SK-N-SH (cell line): ENCODE measurements at regions of chr4 and their contacts with region 1.

Region 1: GRCh38 chr4:168514249-168514852 is 17.5 kb downstream of the PALLD start:
- DNase-seq: peak; percentile 22
- H3K4me3 ChIP-seq: no peak overlapping the region
- H3K27ac ChIP-seq: no peak overlapping the region
- H3K4me1 ChIP-seq: peaks cover 0 to 4% of the 10 kb centered on the region in 2 experiments; a peak in 3 of 4 replicates
- H3K27me3 ChIP-seq: no peaks in the 10 kb centered on the region
- CTCF ChIP-seq: peak; percentile 68
- EP300 ChIP-seq: no peak
- RAD21 ChIP-seq: peak; percentile 57

Region 2: DNA sequence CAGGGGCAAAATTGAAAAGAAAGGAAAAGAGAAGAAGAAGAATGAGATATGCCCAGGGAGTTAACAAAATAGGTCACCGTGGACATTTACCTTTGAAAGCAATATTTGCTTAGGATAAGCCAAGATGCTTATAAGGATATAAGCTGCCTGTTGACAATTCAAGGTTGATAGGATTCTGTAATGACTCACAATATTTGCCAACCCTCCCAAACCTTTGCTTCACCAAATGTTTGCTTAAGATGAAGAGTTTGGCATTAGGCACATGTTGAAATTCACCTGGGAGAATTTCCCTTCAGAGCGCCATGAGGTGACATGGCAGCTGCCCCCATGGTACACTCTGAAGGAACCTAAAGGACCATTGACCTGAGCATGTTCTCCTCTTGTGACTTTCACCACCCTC is 13.0 kb before region 1 on chr4:
- CTCF ChIA-PET with region 1: interaction called, 18 read pairs
- POLR2A ChIA-PET with region 1: no interaction called
- DNase-seq: no peak
- H3K4me3 ChIP-seq: no peak overlapping the region
- H3K27ac ChIP-seq: no peak overlapping the region
- H3K4me1 ChIP-seq: peaks cover 0 to 4% of the 10 kb centered on the region in 2 experiments; a peak in 1 of 4 replicates
- H3K27me3 ChIP-seq: no peaks in the 10 kb centered on the region
- CTCF ChIP-seq: no peak
- EP300 ChIP-seq: no peak
- RAD21 ChIP-seq: no peak

Region 3: GRCh38 chr4:168528131-168528949 is 14.0 kb after region 1 on chr4:
- CTCF ChIA-PET with region 1: interaction called, 20 read pairs
- POLR2A ChIA-PET with region 1: no interaction called
- DNase-seq: no peak
- H3K4me3 ChIP-seq: no peak overlapping the region
- H3K27ac ChIP-seq: peak overlapping the region in 1 of 2 experiments; percentile 65; a peak in 2 of 4 replicates
- H3K4me1 ChIP-seq: peaks cover 0 to 20% of the 10 kb centered on the region in 2 experiments; a peak in 2 of 4 replicates
- H3K27me3 ChIP-seq: no peaks in the 10 kb centered on the region
- CTCF ChIP-seq: no peak
- EP300 ChIP-seq: no peak
- RAD21 ChIP-seq: no peak

Region 4: DNA sequence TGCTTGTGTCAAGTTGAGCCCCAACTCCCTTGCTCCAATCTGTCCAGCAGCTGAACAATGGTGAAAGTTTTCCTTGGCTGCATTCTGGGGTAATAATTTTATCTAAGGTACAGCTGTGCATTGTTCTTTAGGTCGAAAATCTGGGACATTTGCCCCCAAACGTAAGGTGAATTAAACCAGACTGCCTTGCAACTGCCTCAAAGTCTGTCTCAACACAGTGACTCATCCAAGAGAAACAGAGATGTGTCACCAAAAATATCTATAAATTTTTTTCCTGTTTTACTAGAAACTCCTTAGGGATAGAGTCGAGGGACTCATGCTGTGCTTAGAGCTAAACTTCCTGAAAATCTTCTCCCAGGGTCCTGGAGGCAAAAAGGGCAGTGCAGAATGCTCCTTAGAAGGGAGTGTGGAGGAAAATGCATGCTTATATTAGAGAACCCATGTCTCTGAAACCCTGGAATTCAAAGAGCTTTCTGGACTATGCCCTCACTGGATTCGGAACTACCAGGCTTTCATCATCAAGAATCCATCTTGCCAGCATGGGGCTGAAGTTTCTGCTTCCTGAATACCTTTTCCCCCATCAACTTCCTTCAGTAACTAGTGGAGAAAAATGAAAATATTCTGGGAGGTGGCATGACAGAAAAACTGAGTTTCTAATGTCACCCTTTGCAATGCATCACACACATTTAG is 98.2 kb after region 1 on chr4:
- CTCF ChIA-PET with region 1: no interaction called
- POLR2A ChIA-PET with region 1: no interaction called
- DNase-seq: no peak
- H3K4me3 ChIP-seq: peak overlapping the region in 1 of 2 experiments; percentile 16; a peak in 1 of 4 replicates
- H3K27ac ChIP-seq: peak overlapping the region; percentile 22 to 73
- H3K4me1 ChIP-seq: peaks cover 0 to 67% of the 10 kb centered on the region in 2 experiments
- H3K27me3 ChIP-seq: no peaks in the 10 kb centered on the region
- CTCF ChIP-seq: no peak
- EP300 ChIP-seq: peak; percentile 11 to 85; a peak in 3 of 4 replicates
- RAD21 ChIP-seq: no peak

Region 5: DNA sequence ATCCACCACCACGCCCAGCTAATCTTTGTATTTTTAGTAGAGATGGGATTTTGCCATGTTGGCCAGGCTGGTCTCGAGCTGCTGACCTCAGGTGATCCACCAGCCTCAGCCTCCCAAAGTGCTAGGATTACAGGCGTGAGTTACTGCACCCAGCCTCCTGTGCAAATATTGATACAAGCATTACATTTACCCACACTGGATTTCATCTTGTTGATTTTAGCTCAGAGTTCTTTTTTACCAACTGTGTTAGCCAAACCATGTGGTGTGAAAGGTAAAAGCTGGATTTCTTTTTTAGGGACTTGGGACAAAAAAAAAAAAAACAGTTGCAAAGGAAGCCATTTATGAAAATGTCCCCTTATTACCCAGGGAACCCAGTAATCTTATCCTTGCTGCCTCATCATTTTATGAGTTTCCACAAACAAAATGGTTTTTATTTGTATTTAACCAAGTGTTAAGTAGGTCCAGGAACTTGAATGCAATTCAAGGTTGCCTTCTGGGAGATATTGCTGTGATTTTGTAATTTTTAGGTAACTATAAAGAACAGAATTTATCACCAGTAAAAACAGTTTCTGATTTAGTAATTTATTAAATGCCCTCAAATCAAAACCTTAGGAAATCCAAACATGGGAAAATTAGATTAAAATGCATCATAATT is 185.0 kb after region 1 on chr4:
- CTCF ChIA-PET with region 1: no interaction called
- POLR2A ChIA-PET with region 1: no interaction called
- DNase-seq: no peak
- H3K4me3 ChIP-seq: no peak overlapping the region
- H3K27ac ChIP-seq: no peak overlapping the region
- H3K4me1 ChIP-seq: peaks cover 0 to 5% of the 10 kb centered on the region in 2 experiments; a peak in 2 of 4 replicates
- H3K27me3 ChIP-seq: no peaks in the 10 kb centered on the region
- CTCF ChIP-seq: no peak
- EP300 ChIP-seq: no peak
- RAD21 ChIP-seq: no peak